PC-3 (cell line): ENCODE measurements at regions of chr12 and their contacts with region 1.

Region 1: DNA sequence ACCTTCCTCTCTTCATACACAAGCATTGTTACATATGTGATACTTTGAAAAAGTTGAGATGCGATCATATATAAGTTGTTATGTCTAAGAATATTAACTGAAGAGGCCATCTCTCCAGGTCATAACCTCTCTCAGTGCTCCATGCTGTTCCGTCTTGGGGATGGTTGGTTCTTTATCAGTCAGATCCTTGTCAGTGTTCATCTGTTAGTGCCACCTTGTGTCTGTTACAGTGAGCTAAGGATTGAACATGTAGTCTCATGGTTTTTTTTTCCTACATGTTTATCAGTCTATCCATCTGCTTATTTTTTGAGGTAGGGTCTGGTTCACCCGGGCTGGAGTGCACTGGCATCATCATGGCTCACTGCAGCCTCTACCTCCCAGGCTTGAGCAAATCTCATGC is 30.5 kb downstream of the EP400 start:
- DNase-seq: peak; percentile 35
- ATAC-seq: peak; percentile 76
- H3K4me3 ChIP-seq: no peak overlapping the region
- H3K27ac ChIP-seq: no peak overlapping the region
- H3K4me1 ChIP-seq: peaks cover 11% of the 10 kb centered on the region
- H3K27me3 ChIP-seq: no peaks in the 10 kb centered on the region
- CTCF ChIP-seq: peak; percentile 60

Region 2: DNA sequence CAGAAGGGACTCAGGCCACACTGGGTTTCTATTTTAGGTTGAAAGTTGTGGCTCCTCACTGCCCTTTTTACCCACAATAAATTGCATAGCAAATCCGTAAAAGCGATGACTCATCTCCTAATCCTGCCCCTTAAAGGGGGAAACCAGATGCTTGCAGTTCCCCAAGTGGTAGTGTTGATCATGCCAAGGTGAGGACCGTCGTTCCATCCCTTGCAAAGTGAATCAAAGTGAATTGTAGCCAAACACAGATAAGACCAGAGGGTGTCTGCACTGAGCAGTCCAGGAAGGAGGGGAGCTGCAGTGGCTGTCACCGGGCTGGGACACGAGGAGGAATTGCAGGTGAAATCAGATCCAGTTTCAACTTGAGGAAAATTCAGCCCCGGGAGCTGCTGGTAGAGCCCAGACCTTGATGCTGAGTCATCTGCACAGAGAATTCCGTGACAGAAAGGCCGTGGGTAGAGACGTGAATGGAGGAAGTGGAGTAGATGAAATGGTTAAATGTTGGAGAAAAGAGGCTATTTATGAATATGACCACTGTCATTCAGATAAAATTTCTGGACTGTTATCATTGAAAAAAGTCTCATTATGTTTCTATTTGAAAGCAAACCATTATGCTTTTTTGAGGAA is 196.2 kb before region 1 on chr12:
- CTCF ChIA-PET with region 1: no interaction called
- POLR2A ChIA-PET with region 1: no interaction called
- intact Hi-C with region 1: no loop called
- DNase-seq: peak; percentile 84
- ATAC-seq: peak; percentile 86
- H3K4me3 ChIP-seq: peak overlapping the region; percentile 33
- H3K27ac ChIP-seq: peak overlapping the region; percentile 78
- H3K4me1 ChIP-seq: peaks cover 25% of the 10 kb centered on the region
- H3K27me3 ChIP-seq: no peaks in the 10 kb centered on the region
- CTCF ChIP-seq: no peak

Region 3: DNA sequence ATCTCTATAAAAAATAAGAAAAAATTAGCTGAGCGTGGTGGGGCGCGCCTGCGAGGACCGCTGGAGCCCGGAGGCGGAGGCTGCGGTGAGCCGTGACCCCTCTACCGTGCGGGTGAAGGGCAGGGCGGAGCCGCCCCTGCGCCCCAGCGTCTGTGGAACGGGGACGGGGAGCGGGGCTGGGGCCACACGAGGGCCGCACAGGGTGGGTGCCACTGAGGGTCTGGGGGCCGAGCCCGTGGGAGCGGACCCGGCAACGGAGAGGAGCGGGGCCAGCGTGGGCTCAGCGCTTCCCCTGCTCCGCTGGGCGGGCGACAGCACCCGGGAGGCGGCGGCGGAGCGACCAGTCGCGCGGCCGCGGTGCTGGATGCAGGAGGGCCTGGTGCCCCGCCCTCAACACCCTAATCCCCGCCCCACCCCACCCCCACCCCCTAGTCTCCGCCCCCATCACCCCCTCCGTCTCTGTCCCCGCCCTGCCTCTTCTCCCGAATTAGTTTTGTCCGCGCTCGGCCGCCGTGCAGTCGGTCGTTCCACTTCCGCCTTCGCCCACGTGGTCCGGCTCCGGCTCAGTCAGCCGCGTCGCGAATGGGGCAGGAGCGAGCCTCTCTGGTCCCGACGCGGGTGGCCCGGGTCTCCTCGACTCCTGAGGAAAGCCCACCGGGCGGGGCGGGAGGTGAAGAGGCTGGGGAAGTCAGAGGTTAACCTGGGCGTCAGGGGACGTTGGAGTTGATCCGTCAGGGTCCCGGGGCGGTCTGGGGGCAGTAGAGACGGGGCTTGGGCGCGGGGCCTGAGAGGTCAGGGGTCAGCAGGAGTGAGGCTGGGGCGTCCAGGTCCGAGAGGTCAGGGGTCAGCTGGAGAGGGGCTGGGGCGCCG is 51.3 kb before region 1 on chr12 and contains the start of gene PUS1:
- CTCF ChIA-PET with region 1: interaction called, 3 read pairs
- POLR2A ChIA-PET with region 1: interaction called, 12 read pairs
- intact Hi-C with region 1: no loop called
- DNase-seq: peak; percentile 96
- ATAC-seq: peak; percentile 83
- H3K4me3 ChIP-seq: peak within 1 kb of the TSS; percentile 90
- H3K27ac ChIP-seq: peak within 1 kb of the TSS; percentile 81
- H3K4me1 ChIP-seq: peaks cover 14% of the 10 kb centered on the region
- H3K27me3 ChIP-seq: no peaks in the 10 kb centered on the region
- CTCF ChIP-seq: no peak
- total RNA-seq, gene PUS1: 74.0 TPM in 2 replicates

Region 4: DNA sequence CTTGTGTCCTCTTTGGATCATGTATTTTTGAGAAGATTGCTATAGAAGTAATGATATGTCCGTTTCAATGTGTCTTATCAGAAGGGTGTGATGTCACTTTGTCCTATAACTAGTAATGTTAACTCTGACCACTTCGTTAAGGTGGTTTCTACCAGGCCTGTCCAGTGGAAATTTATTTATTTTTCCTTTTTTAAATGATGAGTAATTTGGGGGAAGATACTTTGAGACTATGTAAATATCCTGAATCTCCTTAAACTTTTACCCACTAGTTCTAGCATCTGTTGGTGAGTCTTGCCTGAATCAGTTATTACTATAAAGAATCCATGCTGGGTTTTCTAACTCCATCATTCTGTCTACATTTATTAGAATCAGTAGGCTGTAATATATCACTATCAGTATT is 15.2 kb before region 1 on chr12:
- CTCF ChIA-PET with region 1: no interaction called
- POLR2A ChIA-PET with region 1: interaction called, 5 read pairs
- intact Hi-C with region 1: loop called (anchors 1 kb)
- DNase-seq: peak; percentile 79
- ATAC-seq: peak; percentile 98
- H3K4me3 ChIP-seq: peak overlapping the region; percentile 39
- H3K27ac ChIP-seq: peak overlapping the region; percentile 71
- H3K4me1 ChIP-seq: peaks cover 28% of the 10 kb centered on the region
- H3K27me3 ChIP-seq: no peaks in the 10 kb centered on the region
- CTCF ChIP-seq: no peak